Mammary epithelial cell (primary cell): ENCODE measurements at regions of chr1 and their contacts with region 1.

Region 1: DNA sequence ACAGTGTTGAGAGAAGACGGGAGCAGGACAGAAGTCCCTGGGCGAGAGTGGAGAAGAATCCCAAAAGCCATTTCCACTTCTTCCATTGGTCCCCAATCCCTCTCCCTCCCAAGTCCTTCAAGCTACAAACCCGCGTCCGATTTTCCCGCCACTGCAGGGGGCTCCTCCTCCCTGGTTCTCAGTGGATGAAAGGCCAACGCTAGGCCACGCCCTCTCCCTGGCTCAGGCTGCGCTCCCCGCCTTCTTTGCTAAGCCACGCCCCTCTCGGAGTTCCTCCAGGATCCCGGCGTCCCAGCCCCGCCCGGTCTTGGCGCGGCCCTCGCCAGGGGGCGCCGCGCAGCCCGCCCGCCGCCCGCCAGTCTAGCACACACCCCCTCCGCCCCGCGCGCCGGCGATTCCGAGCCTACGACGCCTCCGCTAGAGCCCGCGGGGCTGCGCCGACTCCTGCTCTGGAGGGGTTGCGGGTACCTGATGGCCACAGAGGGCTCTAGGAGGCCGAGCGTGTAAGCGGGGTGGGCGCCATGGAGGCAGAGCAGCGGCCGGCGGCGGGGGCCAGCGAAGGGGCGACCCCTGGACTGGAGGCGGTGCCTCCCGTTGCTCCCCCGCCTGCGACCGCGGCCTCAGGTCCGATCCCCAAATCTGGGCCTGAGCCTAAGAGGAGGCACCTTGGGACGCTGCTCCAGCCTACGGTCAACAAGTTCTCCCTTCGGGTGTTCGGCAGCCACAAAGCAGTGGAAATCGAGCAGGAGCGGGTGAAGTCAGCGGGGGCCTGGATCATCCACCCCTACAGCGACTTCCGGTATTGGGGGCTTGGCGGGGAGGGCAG is at the start of gene HCN3:
- DNase-seq: peak; percentile 90
- H3K4me3 ChIP-seq: peak within 1 kb of the TSS; percentile 47 to 86 (median 68)
- H3K27ac ChIP-seq: no peak within 1 kb of the TSS
- H3K4me1 ChIP-seq: peaks cover 20% of the 10 kb centered on the region
- H3K27me3 ChIP-seq: no peaks in the 10 kb centered on the region
- CTCF ChIP-seq: peak; percentile 34 to 48
- total RNA-seq, gene HCN3: 1.3 to 4.8 TPM

Region 2: GRCh38 chr1:155218854-155219591 is 58.3 kb before region 1 on chr1:
- CTCF ChIA-PET with region 1: no interaction called
- dilution Hi-C with region 1: loop called (anchors 5 kb)
- in situ Hi-C with region 1: no loop called
- intact Hi-C with region 1: no loop called
- DNase-seq: peak; percentile 43
- H3K4me3 ChIP-seq: no peak overlapping the region
- H3K27ac ChIP-seq: no peak overlapping the region
- H3K4me1 ChIP-seq: peaks cover 6% of the 10 kb centered on the region
- H3K27me3 ChIP-seq: no peaks in the 10 kb centered on the region
- CTCF ChIP-seq: no peak

Region 3: GRCh38 chr1:155308493-155309422 is 31.5 kb after region 1 on chr1 and contains the start of gene FDPS:
- CTCF ChIA-PET with region 1: interaction called, 3 read pairs
- dilution Hi-C with region 1: no loop called
- in situ Hi-C with region 1: no loop called
- intact Hi-C with region 1: loop called (anchors 1 kb)
- DNase-seq: peak; percentile 100
- H3K4me3 ChIP-seq: peak within 1 kb of the TSS; percentile 73 to 86 (median 85)
- H3K27ac ChIP-seq: peak within 1 kb of the TSS; percentile 87
- H3K4me1 ChIP-seq: peaks cover 19% of the 10 kb centered on the region
- H3K27me3 ChIP-seq: no peaks in the 10 kb centered on the region
- CTCF ChIP-seq: no peak
- total RNA-seq, gene FDPS: 180 to 795 TPM

Region 4: GRCh38 chr1:155591770-155592169 is 314.5 kb after region 1 on chr1:
- CTCF ChIA-PET with region 1: no interaction called
- dilution Hi-C with region 1: no loop called
- in situ Hi-C with region 1: no loop called
- intact Hi-C with region 1: loop called (anchors 1 kb)
- DNase-seq: peak; percentile 33
- H3K4me3 ChIP-seq: no peak overlapping the region
- H3K27ac ChIP-seq: no peak overlapping the region
- H3K4me1 ChIP-seq: no peaks in the 10 kb centered on the region
- H3K27me3 ChIP-seq: no peaks in the 10 kb centered on the region
- CTCF ChIP-seq: peak; percentile 43 to 50

Region 5: GRCh38 chr1:155622191-155622590 is 344.9 kb after region 1 on chr1:
- CTCF ChIA-PET with region 1: no interaction called
- dilution Hi-C with region 1: no loop called
- in situ Hi-C with region 1: no loop called
- intact Hi-C with region 1: no loop called
- DNase-seq: no peak
- H3K4me3 ChIP-seq: no peak overlapping the region
- H3K27ac ChIP-seq: no peak overlapping the region
- H3K4me1 ChIP-seq: no peaks in the 10 kb centered on the region
- H3K27me3 ChIP-seq: no peaks in the 10 kb centered on the region
- CTCF ChIP-seq: no peak